ENCODE measurements at regions of chr17 and their contacts with region 1.

Region 1: GRCh38 chr17:48074315-48075081 is 26.3 kb downstream of the NFE2L1 start:
- DNase-seq: peak; percentile 72 to 84 (median 75)
- H3K4me3 ChIP-seq: no peak overlapping the region
- H3K27ac ChIP-seq: no peak overlapping the region
- H3K4me1 ChIP-seq: no peaks in the 10 kb centered on the region
- H3K27me3 ChIP-seq: no peaks in the 10 kb centered on the region

Region 2: DNA sequence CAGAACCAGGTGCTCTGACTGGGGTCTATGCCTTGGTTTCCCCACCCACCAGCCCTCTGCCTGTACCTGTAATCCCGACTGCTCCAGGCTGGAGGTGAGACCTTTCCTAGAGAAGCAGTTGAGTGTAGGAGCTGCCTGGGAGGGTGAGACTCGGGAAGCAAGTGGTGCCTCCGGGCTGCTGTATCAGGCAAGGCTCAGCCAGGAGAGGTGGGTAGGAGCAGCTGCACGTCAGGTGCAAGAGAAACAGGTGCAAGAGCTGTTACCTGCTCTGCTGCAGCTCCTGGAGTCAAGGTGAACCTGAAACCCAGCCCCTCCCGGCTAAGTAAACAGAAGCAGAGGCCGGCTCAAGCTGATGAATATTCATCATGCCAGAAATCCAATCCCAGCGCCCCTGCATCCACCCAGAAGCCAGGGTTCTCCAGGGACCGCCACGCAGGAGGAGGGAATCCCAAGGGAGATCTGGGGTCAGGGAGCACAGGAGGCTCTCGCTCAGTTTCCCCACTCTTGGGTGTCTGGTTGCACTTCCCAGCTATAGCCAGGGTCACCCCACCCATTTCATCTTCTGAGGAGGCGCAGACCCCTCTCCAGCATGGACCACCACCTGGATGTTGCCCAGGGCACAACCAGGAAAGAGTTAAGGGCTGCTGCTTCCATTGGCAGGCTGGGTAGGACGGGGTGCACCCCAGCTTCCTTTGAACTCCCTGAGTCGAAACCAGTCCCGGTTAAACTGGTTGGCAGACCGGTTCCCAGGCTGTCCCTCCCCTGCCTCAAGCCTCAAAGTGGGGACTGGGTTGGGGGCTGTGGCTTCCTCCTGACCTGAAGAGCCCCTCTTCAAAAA is 116.7 kb before region 1 on chr17 and contains the start of gene PRR15L:
- CTCF ChIA-PET with region 1: no interaction called
- POLR2A ChIA-PET with region 1: no interaction called
- DNase-seq: no peak
- H3K4me3 ChIP-seq: no peak within 1 kb of the TSS
- H3K27ac ChIP-seq: no peak within 1 kb of the TSS
- H3K4me1 ChIP-seq: peaks cover 0 to 5% (median 0%) of the 10 kb centered on the region in 4 experiments
- H3K27me3 ChIP-seq: no peaks in the 10 kb centered on the region

Region 3: GRCh38 chr17:48037036-48037837 is 37.3 kb before region 1 on chr17 and contains the start of gene COPZ2:
- CTCF ChIA-PET with region 1: interaction called, 188 read pairs
- POLR2A ChIA-PET with region 1: interaction called, 4 read pairs
- DNase-seq: peak; percentile 51 to 75 (median 74)
- H3K4me3 ChIP-seq: peak within 1 kb of the TSS; percentile 29 to 84 (median 60)
- H3K27ac ChIP-seq: no peak within 1 kb of the TSS
- H3K4me1 ChIP-seq: peaks cover 0 to 13% (median 11%) of the 10 kb centered on the region in 4 experiments
- H3K27me3 ChIP-seq: peaks cover 4 to 41% (median 12%) of the 10 kb centered on the region in 5 experiments

Region 4: GRCh38 chr17:48047741-48048383 is 26.6 kb before region 1 on chr17 and contains the start of gene NFE2L1:
- CTCF ChIA-PET with region 1: interaction called, 19 read pairs
- POLR2A ChIA-PET with region 1: no interaction called
- DNase-seq: peak; percentile 99 to 100 (median 100)
- H3K4me3 ChIP-seq: peak within 1 kb of the TSS; percentile 79 to 94 (median 84)
- H3K27ac ChIP-seq: peak within 1 kb of the TSS; percentile 88 to 94
- H3K4me1 ChIP-seq: peaks cover 7 to 54% (median 42%) of the 10 kb centered on the region in 4 experiments
- H3K27me3 ChIP-seq: no peaks in the 10 kb centered on the region

Region 5: GRCh38 chr17:48054238-48055185 is 20.0 kb before region 1 on chr17:
- CTCF ChIA-PET with region 1: interaction called, 16 read pairs
- POLR2A ChIA-PET with region 1: no interaction called
- DNase-seq: no peak
- H3K4me3 ChIP-seq: no peak overlapping the region
- H3K27ac ChIP-seq: no peak overlapping the region
- H3K4me1 ChIP-seq: peaks cover 0 to 39% (median 32%) of the 10 kb centered on the region in 4 experiments
- H3K27me3 ChIP-seq: no peaks in the 10 kb centered on the region

Region 6: DNA sequence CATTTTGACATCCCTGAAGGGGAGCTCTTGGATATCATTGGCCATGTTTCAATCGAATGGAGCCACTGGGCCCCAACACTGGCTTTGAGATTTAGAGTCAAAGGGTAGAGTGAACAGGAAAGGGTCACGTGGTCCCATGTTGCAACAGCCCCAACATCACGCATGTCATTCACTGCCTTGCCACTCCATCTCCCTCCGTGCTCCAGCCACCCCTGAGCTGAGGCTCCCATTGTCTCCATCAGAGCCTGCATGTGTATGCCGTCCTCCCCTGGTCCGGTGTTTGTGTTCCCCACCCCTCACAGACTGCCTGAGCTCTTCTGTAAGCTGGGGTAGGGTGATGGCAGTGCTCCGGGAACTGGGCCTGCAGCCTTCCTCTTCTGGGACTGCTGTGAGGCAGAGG is 14.2 kb before region 1 on chr17:
- CTCF ChIA-PET with region 1: interaction called, 37 read pairs
- POLR2A ChIA-PET with region 1: interaction called, 4 read pairs
- DNase-seq: no peak
- H3K4me3 ChIP-seq: no peak overlapping the region
- H3K27ac ChIP-seq: no peak overlapping the region
- H3K4me1 ChIP-seq: no peaks in the 10 kb centered on the region
- H3K27me3 ChIP-seq: no peaks in the 10 kb centered on the region

Region 7: GRCh38 chr17:48084932-48085444 is 10.5 kb after region 1 on chr17:
- CTCF ChIA-PET with region 1: interaction called, 37 read pairs
- POLR2A ChIA-PET with region 1: no interaction called
- DNase-seq: no peak
- H3K4me3 ChIP-seq: no peak overlapping the region
- H3K27ac ChIP-seq: no peak overlapping the region
- H3K4me1 ChIP-seq: no peaks in the 10 kb centered on the region
- H3K27me3 ChIP-seq: no peaks in the 10 kb centered on the region

Region 8: DNA sequence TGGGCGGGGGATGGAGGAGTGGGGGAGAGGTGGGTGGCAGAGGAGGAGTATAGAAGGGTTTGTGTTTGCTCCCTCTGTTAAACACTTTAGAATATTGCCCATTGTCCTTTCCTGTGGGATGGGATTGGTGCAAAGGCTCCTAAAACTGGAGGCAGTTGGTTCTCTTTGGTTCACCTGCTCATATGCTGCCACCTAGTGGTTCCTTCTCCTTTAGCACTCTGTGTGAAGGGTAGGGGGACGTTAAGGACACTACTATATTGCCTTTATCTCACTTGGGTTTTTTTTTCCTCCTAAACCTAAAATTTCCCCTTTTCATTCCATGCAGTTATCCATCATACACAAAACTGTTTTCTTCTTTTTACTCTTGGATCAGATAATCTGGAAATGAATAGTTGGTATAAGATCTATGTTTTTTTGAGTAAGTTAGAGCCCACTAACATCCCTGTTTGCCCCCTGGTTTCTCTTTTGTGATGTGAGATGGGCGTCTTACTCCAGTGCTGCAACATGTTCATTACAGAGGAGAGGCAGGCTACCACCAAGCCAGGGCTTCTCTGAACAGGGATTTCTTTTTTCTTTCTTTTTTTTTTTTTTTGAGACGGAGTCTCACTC is 56.8 kb after region 1 on chr17:
- CTCF ChIA-PET with region 1: interaction called, 169 read pairs
- POLR2A ChIA-PET with region 1: no interaction called
- DNase-seq: peak; percentile 61 to 77 (median 65)
- H3K4me3 ChIP-seq: no peak overlapping the region
- H3K27ac ChIP-seq: no peak overlapping the region
- H3K4me1 ChIP-seq: no peaks in the 10 kb centered on the region
- H3K27me3 ChIP-seq: no peaks in the 10 kb centered on the region